ENCODE measurements at regions of chr7 and their contacts with region 1.

Region 1: DNA sequence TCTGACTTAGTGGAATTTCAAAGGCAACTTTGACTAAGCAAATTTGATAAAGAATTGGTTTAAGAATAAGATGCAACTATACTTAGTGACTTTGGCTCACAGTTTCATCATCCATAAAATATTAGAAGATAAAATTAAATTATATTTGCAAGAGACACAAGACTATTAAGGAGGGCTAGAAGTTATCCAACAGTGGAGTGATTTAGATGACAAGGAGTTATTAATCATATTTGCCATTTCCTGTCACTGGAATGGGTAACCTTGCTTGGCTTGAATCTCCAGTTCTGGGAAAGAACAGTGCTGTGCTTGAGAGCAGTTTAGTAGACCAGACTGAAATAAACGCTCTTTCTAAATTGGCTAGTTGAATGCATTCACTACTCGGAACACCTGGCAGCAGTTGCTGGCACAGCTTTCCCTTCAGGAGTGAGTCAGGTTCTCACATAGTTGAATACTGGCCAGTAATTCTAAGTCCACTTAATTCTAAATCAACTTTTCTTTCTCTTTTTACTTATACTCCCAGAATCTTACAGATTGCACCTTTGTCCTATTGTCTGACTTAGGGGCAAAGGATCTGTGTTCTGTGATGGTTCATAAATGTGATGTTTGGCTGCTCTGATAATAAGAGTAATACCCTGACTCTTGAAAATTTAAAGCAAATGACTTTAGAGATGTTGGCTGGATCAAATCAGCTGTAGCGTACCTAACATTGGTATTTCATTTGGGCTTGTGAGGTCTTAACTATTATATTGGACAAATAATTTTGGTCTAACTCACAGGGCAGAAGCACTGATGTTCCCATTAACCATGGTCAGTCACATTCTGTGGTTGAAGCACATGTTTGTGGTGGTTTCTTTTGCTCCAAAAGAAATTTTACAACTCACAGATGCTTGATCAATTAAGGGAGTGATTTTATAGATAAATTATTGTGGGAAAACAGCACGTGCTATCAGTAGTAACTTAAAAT is 16.6 kb downstream of the STMP1 start:
- DNase-seq: peak; percentile 90
- ATAC-seq: peak; percentile 94
- H3K4me3 ChIP-seq: peak overlapping the region; percentile 5; the same call in 1 of the 2 replicates
- H3K27ac ChIP-seq: peak overlapping the region; percentile 28
- H3K4me1 ChIP-seq: peaks cover 26% of the 10 kb centered on the region
- H3K27me3 ChIP-seq: no peaks in the 10 kb centered on the region
- CTCF ChIP-seq: no peak

Region 2: GRCh38 chr7:135525426-135525825 is 153.5 kb before region 1 on chr7:
- CTCF ChIA-PET with region 1: no interaction called
- POLR2A ChIA-PET with region 1: no interaction called
- intact Hi-C with region 1: no loop called
- DNase-seq: no peak
- ATAC-seq: no peak
- H3K4me3 ChIP-seq: no peak overlapping the region
- H3K27ac ChIP-seq: no peak overlapping the region
- H3K4me1 ChIP-seq: no peaks in the 10 kb centered on the region
- H3K27me3 ChIP-seq: no peaks in the 10 kb centered on the region
- CTCF ChIP-seq: no peak

Region 3: DNA sequence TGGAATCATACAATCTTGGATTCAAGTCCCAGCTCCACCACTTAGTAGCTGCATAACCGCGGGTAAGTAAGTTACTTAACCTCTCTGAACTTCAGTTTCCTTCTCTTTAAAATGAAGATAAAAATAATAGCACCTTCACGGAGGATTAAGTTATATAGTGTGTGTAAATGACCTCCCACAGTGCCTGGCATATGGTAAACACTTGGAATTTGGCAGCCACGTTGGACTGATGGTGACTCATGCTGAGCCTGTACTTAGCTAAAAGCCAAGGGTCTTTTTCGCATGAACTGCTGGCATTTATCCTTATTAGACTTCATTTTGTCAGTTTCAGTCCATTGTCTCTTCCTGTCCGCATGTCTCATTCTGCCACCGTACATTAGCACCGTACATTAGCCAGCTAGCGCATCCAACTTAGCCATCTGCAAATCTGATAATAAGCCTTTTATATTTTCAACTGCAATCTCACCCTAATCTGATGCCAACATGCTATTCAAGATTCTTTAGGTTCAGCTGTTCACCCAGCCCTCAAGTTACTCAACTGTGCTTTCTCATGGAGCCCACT is 37.9 kb after region 1 on chr7:
- CTCF ChIA-PET with region 1: no interaction called
- POLR2A ChIA-PET with region 1: no interaction called
- intact Hi-C with region 1: loop called (anchors 2 kb)
- DNase-seq: peak; percentile 85
- ATAC-seq: peak; percentile 74
- H3K4me3 ChIP-seq: no peak overlapping the region
- H3K27ac ChIP-seq: peak overlapping the region; percentile 51
- H3K4me1 ChIP-seq: peaks cover 32% of the 10 kb centered on the region
- H3K27me3 ChIP-seq: no peaks in the 10 kb centered on the region
- CTCF ChIP-seq: no peak